ENCODE measurements at regions of chr3 and their contacts with region 1.

Region 1: GRCh38 chr3:95539950-95540483 is 1274.4 kb upstream of the EPHA6 start:
- DNase-seq: no peak
- H3K4me3 ChIP-seq: no peak overlapping the region
- H3K27me3 ChIP-seq: no peaks in the 10 kb centered on the region
- CTCF ChIP-seq: no peak

Region 2: GRCh38 chr3:94162700-94163099 is 1377.3 kb before region 1 on chr3:
- CTCF ChIA-PET with region 1: interaction called, 10 read pairs
- POLR2A ChIA-PET with region 1: no interaction called
- DNase-seq: no peak
- H3K4me3 ChIP-seq: no peak overlapping the region
- H3K27me3 ChIP-seq: no peaks in the 10 kb centered on the region
- CTCF ChIP-seq: no peak

Region 3: GRCh38 chr3:94928907-94929362 is 611.1 kb before region 1 on chr3:
- CTCF ChIA-PET with region 1: no interaction called
- POLR2A ChIA-PET with region 1: no interaction called
- DNase-seq: no peak
- H3K4me3 ChIP-seq: no peak overlapping the region
- H3K27me3 ChIP-seq: no peaks in the 10 kb centered on the region
- CTCF ChIP-seq: no peak

Region 4: GRCh38 chr3:95289295-95289694 is 250.7 kb before region 1 on chr3:
- CTCF ChIA-PET with region 1: no interaction called
- POLR2A ChIA-PET with region 1: no interaction called
- DNase-seq: no peak
- H3K4me3 ChIP-seq: no peak overlapping the region
- H3K27me3 ChIP-seq: no peaks in the 10 kb centered on the region
- CTCF ChIP-seq: no peak

Measured in BJ (cell line).